HCT116 (cell line): ENCODE measurements at regions of chr5 and their contacts with region 1.

Region 1: GRCh38 chr5:147098233-147098790 is 136.5 kb upstream of the STK32A start:
- DNase-seq: peak; percentile 42
- ATAC-seq: peak; percentile 84
- H3K4me3 ChIP-seq: no peak overlapping the region
- H3K27ac ChIP-seq: no peak overlapping the region
- H3K4me1 ChIP-seq: peaks cover 3 to 7% of the 10 kb centered on the region in 2 experiments; a peak in 3 of 4 replicates
- H3K27me3 ChIP-seq: no peaks in the 10 kb centered on the region
- CTCF ChIP-seq: peak; percentile 44 to 72 (median 68); a peak in 5 of 6 replicates
- POLR2A ChIP-seq: no peak
- RAD21 ChIP-seq: peak; percentile 42

Region 2: DNA sequence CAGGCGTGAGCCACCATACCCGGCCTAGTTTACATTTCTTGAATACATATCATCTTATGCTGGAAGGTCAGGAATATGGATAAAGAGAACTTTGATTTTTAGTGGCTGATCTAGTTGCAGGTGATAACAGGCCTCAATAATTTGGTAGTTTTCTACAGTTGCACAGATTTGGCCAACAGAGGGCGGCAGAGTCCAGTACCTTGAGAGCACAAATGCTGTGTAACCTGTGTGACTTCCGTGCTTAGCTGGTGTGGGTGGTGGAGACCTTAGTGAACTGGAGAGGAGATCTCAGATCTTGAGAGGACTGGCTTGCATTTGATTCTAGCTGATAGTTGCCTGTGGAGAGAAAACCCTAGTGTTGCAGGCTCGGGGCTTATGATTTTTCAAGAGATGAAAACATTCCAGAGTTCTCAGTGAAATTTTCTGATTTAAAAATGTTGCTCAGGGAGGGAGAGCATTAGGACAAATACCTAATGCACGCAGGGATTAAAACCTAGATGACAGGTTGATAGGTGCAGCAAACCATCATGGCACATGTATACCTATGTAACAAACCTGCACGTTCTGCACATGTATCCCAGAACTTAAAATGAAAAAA is 565.0 kb before region 1 on chr5:
- CTCF ChIA-PET with region 1: no interaction called
- POLR2A ChIA-PET with region 1: no interaction called
- RAD21 ChIA-PET with region 1: no interaction called
- intact Hi-C with region 1: loop called (anchors 5 kb)
- DNase-seq: peak; percentile 73
- ATAC-seq: peak; percentile 97
- H3K4me3 ChIP-seq: no peak overlapping the region
- H3K27ac ChIP-seq: no peak overlapping the region
- H3K4me1 ChIP-seq: peaks cover 0 to 3% of the 10 kb centered on the region in 2 experiments; a peak in 2 of 4 replicates
- H3K27me3 ChIP-seq: no peaks in the 10 kb centered on the region
- CTCF ChIP-seq: peak; percentile 70 to 88 (median 77)
- POLR2A ChIP-seq: no peak
- RAD21 ChIP-seq: peak; percentile 91

Region 3: DNA sequence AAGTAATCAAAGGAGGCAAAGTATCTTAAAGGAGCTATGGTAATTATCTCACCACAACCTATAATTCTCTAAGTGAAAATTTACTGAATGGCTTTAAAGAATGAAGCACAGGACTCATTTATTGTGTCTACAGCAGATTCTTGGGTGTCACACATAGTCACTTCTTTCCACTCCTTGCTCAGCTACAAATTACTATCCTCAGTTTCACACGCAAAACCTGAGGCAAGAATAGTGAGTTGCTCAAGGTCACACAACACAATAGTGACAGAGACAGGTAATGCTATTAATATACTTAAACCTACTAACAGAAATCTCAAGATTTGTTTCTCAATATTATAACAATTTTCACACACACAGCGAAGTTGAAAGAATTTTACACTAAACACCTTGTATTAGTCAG is 15.7 kb after region 1 on chr5:
- CTCF ChIA-PET with region 1: interaction called, 12 read pairs
- POLR2A ChIA-PET with region 1: no interaction called
- RAD21 ChIA-PET with region 1: no interaction called
- intact Hi-C with region 1: no loop called
- DNase-seq: no peak
- ATAC-seq: no peak
- H3K4me3 ChIP-seq: no peak overlapping the region
- H3K27ac ChIP-seq: no peak overlapping the region
- H3K4me1 ChIP-seq: no peaks in the 10 kb centered on the region
- H3K27me3 ChIP-seq: no peaks in the 10 kb centered on the region
- CTCF ChIP-seq: no peak
- POLR2A ChIP-seq: no peak
- RAD21 ChIP-seq: no peak

Region 4: GRCh38 chr5:147188200-147189108 is 90.1 kb after region 1 on chr5:
- CTCF ChIA-PET with region 1: interaction called, 62 read pairs
- POLR2A ChIA-PET with region 1: no interaction called
- RAD21 ChIA-PET with region 1: interaction called, 3 to 5 read pairs
- intact Hi-C with region 1: loop called (anchors 2 kb)
- DNase-seq: peak; percentile 42
- ATAC-seq: peak; percentile 93
- H3K4me3 ChIP-seq: no peak overlapping the region
- H3K27ac ChIP-seq: no peak overlapping the region
- H3K4me1 ChIP-seq: no peaks in the 10 kb centered on the region
- H3K27me3 ChIP-seq: peaks cover 3% of the 10 kb centered on the region; the same call in 1 of the 2 replicates
- CTCF ChIP-seq: peak; percentile 65 to 88 (median 71)
- POLR2A ChIP-seq: no peak
- RAD21 ChIP-seq: peak; percentile 84